ENCODE measurements at regions of chr17 and their contacts with region 1.

Region 1: DNA sequence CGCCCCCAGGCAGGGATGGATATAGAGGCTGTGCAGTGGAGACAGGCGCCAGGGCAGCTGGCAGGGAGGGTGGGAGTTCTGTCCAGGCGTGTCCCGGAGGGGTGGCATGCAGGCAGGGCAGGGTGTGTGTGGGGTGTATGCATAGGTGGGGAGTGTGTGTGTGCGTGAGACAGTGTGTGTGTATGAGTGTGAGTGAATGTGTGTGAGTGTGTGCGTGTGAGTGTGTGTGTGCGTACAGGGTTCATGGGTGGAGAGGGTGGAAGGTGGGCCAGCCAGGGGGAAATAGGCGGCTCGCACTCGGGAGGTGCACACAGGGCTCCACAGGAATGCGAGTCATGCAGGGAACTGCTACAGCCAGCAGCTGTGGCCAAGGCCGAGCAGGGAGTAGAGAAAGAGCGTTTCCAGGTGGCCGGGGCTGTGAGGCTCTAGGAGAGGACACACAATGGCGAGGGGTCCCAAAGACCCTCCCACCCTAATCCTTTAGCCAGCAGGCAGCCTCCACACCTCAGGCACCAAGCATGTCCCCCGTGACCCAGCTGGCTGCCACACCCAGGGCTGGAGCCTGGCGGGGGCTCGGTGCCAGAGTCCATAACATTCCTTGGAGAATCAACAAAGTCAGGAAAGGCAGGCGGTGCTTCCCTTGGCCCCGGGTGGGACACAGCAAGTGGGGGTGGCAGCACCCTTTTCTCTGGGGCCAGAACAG is 4.6 kb downstream of the PLCD3 start:
- DNase-seq: no peak

Region 2: GRCh38 chr17:45110668-45111611 is 16.8 kb before region 1 on chr17:
- intact Hi-C with region 1: loop called (anchors 2 kb)
- DNase-seq: peak; percentile 83